ENCODE measurements at regions of chr11 and their contacts with region 1.

Region 1: GRCh38 chr11:79076526-79077115 is 364.2 kb downstream of the TENM4 start:
- DNase-seq: no peak
- H3K4me3 Mint-ChIP-seq: no peak overlapping the region
- H3K27ac Mint-ChIP-seq: no peak overlapping the region
- H3K4me1 Mint-ChIP-seq: no peaks in the 10 kb centered on the region
- H3K27me3 Mint-ChIP-seq: peaks cover 3% of the 10 kb centered on the region

Region 2: DNA sequence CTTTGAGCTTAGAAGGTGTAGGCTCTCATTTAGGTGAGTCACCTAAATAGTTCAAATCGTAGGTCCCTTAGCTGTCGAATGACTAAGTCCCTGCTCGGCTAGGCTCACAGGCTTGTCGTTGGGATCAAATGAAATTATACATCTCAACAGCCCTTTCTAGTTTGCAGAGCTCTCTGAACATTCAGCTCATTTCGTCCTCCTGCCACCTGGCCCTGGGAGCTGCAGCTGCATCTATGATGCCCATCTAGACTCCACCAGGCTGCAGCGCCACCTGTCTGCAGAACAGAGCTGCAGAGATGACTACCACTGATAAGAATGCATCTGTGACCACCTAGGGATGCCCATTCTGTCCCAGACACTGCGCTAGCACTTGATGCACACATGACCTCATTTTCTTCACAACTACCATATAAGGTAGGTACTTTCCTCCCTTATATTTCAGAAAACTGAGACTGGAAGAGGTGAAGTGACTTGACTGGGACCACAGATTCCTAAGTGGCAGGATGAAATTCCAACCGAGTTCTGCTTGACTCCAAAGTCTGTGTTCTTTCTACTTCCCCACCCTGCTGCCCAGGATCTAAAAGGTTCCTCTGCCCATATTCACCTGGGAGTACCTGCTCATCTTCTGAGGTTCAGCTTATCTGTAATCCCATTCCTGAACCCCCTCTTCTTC is 360.8 kb before region 1 on chr11:
- intact Hi-C with region 1: loop called (anchors 10 kb)
- DNase-seq: peak; percentile 14
- H3K4me3 Mint-ChIP-seq: no peak overlapping the region
- H3K27ac Mint-ChIP-seq: no peak overlapping the region
- H3K4me1 Mint-ChIP-seq: no peaks in the 10 kb centered on the region
- H3K27me3 Mint-ChIP-seq: peaks cover 2% of the 10 kb centered on the region

Region 3: GRCh38 chr11:78995171-78995570 is 81.5 kb before region 1 on chr11:
- intact Hi-C with region 1: no loop called
- DNase-seq: no peak
- H3K4me3 Mint-ChIP-seq: no peak overlapping the region
- H3K27ac Mint-ChIP-seq: no peak overlapping the region
- H3K4me1 Mint-ChIP-seq: no peaks in the 10 kb centered on the region
- H3K27me3 Mint-ChIP-seq: peaks cover 3% of the 10 kb centered on the region